SK-N-SH (cell line): ENCODE measurements at regions of chr22 and their contacts with region 1.

Region 1: GRCh38 chr22:44819971-44820631 is 67.7 kb downstream of the ARHGAP8 start:
- DNase-seq: no peak
- H3K4me3 ChIP-seq: peak overlapping the region in 1 of 2 experiments; percentile 47; a peak in 1 of 4 replicates
- H3K27ac ChIP-seq: no peak overlapping the region
- H3K4me1 ChIP-seq: no peaks in the 10 kb centered on the region; a peak in 1 of 4 replicates
- H3K27me3 ChIP-seq: no peaks in the 10 kb centered on the region
- CTCF ChIP-seq: no peak
- EP300 ChIP-seq: no peak
- RAD21 ChIP-seq: no peak

Region 2: DNA sequence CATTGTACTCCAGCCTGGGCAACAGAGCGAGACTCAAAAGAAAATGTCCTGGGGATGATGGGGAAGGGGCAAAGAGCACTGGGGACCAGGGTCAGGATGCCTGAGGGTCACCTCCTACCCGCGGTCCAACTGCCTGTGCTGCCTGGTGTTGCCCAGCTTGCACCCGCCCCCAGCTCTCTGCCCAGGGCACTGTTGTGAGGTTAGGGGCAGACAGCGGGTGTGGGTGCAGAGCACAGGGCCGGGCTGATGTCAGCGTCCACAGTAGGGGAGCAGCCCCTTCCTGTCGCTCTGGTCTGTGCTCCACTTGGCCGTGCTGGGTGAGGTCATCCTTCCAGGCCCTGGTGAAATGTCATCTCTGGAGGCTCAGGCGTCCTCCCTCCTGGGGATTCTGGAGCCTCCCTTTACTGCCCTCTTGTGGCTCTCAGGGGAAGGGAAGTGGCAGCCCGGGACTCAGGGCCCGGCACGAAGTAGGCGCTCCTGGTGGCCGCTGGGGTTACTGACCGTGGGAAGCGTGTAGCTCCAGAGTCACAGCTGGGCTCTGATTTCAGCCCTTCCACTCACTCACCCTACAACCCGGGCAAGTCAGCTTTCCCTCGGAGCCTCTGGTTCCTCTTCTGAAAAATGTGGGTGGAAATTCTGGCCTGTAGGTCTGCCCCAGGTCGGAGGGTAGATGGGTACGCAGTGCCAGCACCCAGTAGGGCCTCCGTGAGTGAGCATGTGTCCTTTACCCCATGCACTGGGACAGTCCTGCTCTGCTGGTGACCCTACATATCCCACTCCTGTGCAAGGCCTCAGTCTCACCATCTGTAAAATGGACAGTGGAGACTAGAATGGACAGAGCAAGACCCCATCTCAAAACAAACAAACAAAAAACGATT is 135.4 kb before region 1 on chr22:
- CTCF ChIA-PET with region 1: no interaction called
- POLR2A ChIA-PET with region 1: no interaction called
- DNase-seq: peak; percentile 92
- H3K4me3 ChIP-seq: peak overlapping the region in 1 of 2 experiments; percentile 52; a peak in 1 of 4 replicates
- H3K27ac ChIP-seq: peak overlapping the region in 1 of 2 experiments; percentile 59; a peak in 1 of 4 replicates
- H3K4me1 ChIP-seq: peaks cover 0 to 16% of the 10 kb centered on the region in 2 experiments; a peak in 1 of 4 replicates
- H3K27me3 ChIP-seq: no peaks in the 10 kb centered on the region
- CTCF ChIP-seq: peak; percentile 97
- EP300 ChIP-seq: no peak
- RAD21 ChIP-seq: peak; percentile 72

Region 3: GRCh38 chr22:44807915-44808690 is 12.0 kb before region 1 on chr22:
- CTCF ChIA-PET with region 1: interaction called, 21 read pairs
- POLR2A ChIA-PET with region 1: no interaction called
- DNase-seq: peak; percentile 77
- H3K4me3 ChIP-seq: no peak overlapping the region
- H3K27ac ChIP-seq: no peak overlapping the region
- H3K4me1 ChIP-seq: no peaks in the 10 kb centered on the region
- H3K27me3 ChIP-seq: peaks cover 8% of the 10 kb centered on the region; the same call in 1 of the 2 replicates
- CTCF ChIP-seq: no peak; the same call in 1 of the 2 replicates
- EP300 ChIP-seq: no peak
- RAD21 ChIP-seq: no peak

Region 4: GRCh38 chr22:45082795-45083194 is 262.7 kb after region 1 on chr22:
- CTCF ChIA-PET with region 1: interaction called, 14 read pairs
- POLR2A ChIA-PET with region 1: no interaction called
- DNase-seq: peak; percentile 75
- H3K4me3 ChIP-seq: no peak overlapping the region
- H3K27ac ChIP-seq: no peak overlapping the region
- H3K4me1 ChIP-seq: 0 out of 4 replicates have a peak, but pooled peaks cover 0 to 8% of the 10 kb centered on the region in 2 experiments
- H3K27me3 ChIP-seq: no peaks in the 10 kb centered on the region
- CTCF ChIP-seq: peak; percentile 13; the same call in 1 of the 2 replicates
- EP300 ChIP-seq: no peak
- RAD21 ChIP-seq: peak; percentile 73

Region 5: DNA sequence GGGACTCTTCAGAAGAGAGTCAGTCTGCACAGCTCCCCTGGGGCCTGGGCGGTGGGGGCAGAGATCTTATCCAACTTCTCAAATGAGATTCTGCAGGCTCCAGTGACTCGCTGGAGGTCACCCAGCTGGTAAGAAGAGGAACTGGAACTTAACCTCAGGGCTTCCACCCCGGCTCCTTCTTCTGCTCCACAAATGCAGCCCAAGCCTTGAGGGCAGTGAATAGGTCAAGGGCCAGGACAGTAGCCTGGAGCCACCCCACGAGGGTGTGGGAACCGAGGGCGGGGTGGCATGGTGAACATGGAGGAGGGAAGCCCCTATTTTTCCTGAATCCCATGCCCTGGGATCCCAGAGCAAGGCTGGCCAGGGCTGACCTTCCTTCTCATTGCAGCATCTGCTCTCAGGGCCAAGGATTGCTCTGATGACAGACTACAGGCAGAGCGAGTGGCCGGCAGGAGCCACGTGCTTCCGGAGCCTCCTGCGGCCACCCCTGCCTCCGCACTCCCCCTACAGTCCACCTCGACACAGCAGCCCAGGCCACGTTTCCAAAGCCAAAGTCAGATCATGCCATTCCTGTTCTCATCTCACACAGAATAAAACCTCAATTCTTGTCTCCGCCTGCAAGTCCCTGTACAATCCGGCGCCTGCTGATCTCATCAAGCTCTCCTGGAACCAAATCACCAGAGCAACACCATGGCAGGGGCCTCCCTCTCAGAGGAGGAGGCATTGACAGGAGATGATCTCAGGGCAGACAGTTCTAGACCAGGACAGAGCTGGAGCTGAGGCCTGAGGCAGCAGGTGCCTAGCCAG is 443.6 kb after region 1 on chr22:
- CTCF ChIA-PET with region 1: interaction called, 10 read pairs
- POLR2A ChIA-PET with region 1: no interaction called
- DNase-seq: peak; percentile 94
- H3K4me3 ChIP-seq: no peak overlapping the region
- H3K27ac ChIP-seq: peak overlapping the region in 1 of 2 experiments; percentile 31; a peak in 3 of 4 replicates
- H3K4me1 ChIP-seq: peaks cover 0 to 12% of the 10 kb centered on the region in 2 experiments; a peak in 1 of 4 replicates
- H3K27me3 ChIP-seq: no peaks in the 10 kb centered on the region
- CTCF ChIP-seq: peak; percentile 72
- EP300 ChIP-seq: peak in 1 of 2 experiments; percentile 14; a peak in 1 of 4 replicates
- RAD21 ChIP-seq: peak; percentile 88